ENCODE measurements at regions of chr17 and their contacts with region 1.

Region 1: DNA sequence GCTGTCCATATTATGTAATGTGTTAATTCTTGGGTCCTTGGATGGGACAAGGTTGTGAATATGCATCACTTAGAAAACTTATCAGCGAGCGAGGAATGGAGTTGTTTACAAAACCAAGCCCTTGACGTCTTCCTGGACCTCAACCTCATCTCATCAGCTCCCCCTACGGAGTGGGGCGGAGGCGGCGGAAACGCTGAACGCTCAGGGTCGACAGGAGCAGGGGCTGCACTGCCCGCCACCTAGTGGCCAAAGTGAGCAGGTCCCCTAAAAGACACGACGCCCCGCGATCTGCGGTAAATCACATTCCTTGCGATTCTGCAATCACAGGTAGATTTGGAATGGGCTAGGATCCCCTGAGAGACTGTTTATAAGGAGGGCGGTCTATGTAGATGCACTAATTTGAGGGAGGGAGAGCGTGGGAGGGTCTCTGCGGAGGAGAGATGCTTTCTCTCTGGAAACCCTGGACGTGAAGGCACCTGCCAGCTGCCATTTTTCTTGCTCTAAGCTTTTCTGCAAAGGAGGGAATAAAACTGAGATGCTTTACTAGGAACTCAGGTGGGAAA is 5.4 kb upstream of the ICAM2 start:
- DNase-seq: peak; percentile 95
- H3K4me3 Mint-ChIP-seq: peak overlapping the region; percentile 75
- H3K27ac Mint-ChIP-seq: peak overlapping the region; percentile 75
- H3K4me1 Mint-ChIP-seq: peaks cover 61% of the 10 kb centered on the region
- H3K27me3 Mint-ChIP-seq: no peaks in the 10 kb centered on the region

Region 2: GRCh38 chr17:63600569-63601438 is 425.0 kb before region 1 on chr17 and contains the start of gene TACO1:
- CTCF ChIA-PET with region 1: no interaction called
- intact Hi-C with region 1: no loop called
- DNase-seq: peak; percentile 88
- H3K4me3 Mint-ChIP-seq: peak within 1 kb of the TSS; percentile 97
- H3K27ac Mint-ChIP-seq: peak within 1 kb of the TSS; percentile 84
- H3K4me1 Mint-ChIP-seq: peaks cover 29% of the 10 kb centered on the region
- H3K27me3 Mint-ChIP-seq: no peaks in the 10 kb centered on the region
- total RNA-seq, gene TACO1: 27.6 to 28.9 TPM

Region 3: DNA sequence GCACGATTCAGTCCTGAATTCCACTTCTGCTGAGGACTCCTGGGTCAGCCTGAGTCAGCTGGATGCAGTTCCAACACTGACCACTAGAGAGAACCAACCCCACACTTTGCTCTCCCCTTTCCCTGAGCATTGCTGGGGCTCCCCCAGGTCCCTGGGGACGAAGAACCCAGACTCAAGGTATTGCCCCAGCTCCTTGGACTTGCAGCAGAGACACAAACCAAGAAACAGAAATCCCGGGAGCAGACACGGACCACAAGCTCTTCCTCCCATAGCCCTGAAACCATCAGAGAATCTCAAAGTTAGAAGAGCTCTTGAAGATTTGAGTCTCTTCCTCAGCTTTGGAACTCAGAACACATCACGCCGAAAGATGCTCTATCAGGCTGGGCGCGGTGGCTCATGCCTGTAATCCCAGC is 106.5 kb before region 1 on chr17:
- CTCF ChIA-PET with region 1: interaction called, 91 read pairs
- intact Hi-C with region 1: loop called (anchors 1 kb)
- DNase-seq: peak; percentile 86
- H3K4me3 Mint-ChIP-seq: no peak overlapping the region
- H3K27ac Mint-ChIP-seq: no peak overlapping the region
- H3K4me1 Mint-ChIP-seq: peaks cover 5% of the 10 kb centered on the region
- H3K27me3 Mint-ChIP-seq: no peaks in the 10 kb centered on the region

Region 4: DNA sequence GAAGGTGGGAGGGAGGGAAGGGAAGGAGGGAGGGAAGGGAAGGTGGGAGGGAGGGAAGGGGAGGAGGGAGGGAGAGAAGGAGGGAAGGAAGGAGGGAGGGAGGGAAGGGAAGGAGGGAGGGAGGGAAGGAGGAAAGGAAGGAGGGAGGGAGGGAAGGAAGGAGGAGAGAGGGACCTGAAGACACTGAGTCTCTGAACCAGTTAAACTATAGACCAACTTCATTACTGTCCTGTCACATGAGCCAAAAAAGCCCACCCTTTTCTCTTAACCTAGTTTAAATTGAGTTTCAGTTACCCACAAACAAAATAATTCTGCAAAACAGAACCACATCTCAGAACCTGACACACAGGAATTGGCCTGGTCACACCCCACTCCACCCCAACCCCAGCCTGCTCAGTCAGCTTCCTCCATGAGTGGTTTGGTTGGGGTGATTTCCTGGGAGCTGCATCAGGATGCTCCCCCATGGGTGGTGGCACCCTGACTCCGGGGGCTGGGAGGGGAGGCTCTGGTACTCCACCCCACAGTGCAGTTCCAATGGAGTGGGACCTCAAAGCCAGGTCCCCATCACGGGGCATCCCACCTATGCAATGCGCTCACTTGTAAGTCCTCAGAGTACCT is 32.3 kb before region 1 on chr17:
- CTCF ChIA-PET with region 1: interaction called, 13 read pairs
- intact Hi-C with region 1: no loop called
- DNase-seq: no peak
- H3K4me3 Mint-ChIP-seq: no peak overlapping the region
- H3K27ac Mint-ChIP-seq: no peak overlapping the region
- H3K4me1 Mint-ChIP-seq: peaks cover 29% of the 10 kb centered on the region
- H3K27me3 Mint-ChIP-seq: no peaks in the 10 kb centered on the region

Region 5: DNA sequence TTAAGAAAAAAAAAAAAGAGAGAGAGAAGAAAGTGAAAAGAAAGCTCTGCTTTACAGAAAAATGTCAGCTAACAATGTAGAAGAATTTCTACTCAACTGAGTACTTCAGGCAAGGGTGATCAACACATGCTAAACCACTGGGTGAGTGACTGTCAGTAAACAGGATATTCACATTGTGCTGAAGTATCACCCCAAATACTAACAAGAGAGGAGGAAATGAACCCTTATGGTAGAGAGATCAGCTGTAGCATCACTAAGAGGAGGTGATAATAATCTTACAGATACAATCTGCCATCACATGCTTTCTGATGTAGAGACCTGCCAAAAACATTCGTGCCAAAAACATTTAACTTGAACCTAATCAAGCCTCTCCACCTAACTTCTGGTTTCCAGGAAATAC is 25.3 kb after region 1 on chr17:
- CTCF ChIA-PET with region 1: interaction called, 21 read pairs
- intact Hi-C with region 1: no loop called
- DNase-seq: no peak
- H3K4me3 Mint-ChIP-seq: no peak overlapping the region
- H3K27ac Mint-ChIP-seq: peak overlapping the region; percentile 72
- H3K4me1 Mint-ChIP-seq: peaks cover 27% of the 10 kb centered on the region
- H3K27me3 Mint-ChIP-seq: no peaks in the 10 kb centered on the region

Region 6: GRCh38 chr17:64091116-64091515 is 65.3 kb after region 1 on chr17:
- CTCF ChIA-PET with region 1: interaction called, 10 read pairs
- intact Hi-C with region 1: loop called (anchors 2 kb)
- DNase-seq: peak; percentile 34
- H3K4me3 Mint-ChIP-seq: no peak overlapping the region
- H3K27ac Mint-ChIP-seq: peak overlapping the region; percentile 80
- H3K4me1 Mint-ChIP-seq: peaks cover 71% of the 10 kb centered on the region
- H3K27me3 Mint-ChIP-seq: no peaks in the 10 kb centered on the region

Region 7: GRCh38 chr17:64145757-64146417 is 120.1 kb after region 1 on chr17:
- CTCF ChIA-PET with region 1: interaction called, 14 read pairs
- intact Hi-C with region 1: loop called (anchors 5 kb)
- DNase-seq: peak; percentile 97
- H3K4me3 Mint-ChIP-seq: no peak overlapping the region
- H3K27ac Mint-ChIP-seq: no peak overlapping the region
- H3K4me1 Mint-ChIP-seq: peaks cover 16% of the 10 kb centered on the region
- H3K27me3 Mint-ChIP-seq: no peaks in the 10 kb centered on the region